HEK293T (cell line): ENCODE measurements at regions of chr20 and their contacts with region 1.

Region 1: DNA sequence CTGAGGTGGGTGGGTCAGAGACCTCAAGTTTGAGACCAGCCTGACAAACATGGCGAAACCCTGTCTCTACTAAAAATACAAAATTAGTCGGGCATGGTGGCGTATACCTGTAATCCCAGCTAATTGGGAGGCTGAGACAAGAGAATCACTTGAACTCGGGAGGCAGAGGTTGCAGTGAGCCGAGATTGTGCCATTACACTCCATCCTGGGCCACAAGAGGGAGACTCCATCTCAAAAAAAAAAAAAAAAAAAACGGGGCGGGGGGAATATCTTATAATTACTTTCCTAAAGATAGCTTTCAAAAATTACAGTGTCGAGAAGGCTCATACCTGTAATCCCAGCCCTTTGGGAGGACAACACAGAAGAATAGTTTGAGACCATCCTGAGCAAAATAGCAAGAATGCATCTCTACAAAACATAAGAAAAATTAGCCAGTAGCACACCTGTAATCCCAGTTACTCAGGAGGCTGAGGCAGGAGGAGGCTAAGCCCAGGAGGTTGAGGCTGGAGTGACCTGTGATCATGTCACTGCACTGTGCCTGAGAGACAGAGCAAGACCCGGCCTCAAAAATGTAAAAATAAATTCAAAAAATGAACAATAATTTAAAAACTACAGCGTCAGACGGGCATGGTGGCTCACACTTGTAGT is 25.8 kb downstream of the CBFA2T2 start:
- DNase-seq: no peak

Region 2: DNA sequence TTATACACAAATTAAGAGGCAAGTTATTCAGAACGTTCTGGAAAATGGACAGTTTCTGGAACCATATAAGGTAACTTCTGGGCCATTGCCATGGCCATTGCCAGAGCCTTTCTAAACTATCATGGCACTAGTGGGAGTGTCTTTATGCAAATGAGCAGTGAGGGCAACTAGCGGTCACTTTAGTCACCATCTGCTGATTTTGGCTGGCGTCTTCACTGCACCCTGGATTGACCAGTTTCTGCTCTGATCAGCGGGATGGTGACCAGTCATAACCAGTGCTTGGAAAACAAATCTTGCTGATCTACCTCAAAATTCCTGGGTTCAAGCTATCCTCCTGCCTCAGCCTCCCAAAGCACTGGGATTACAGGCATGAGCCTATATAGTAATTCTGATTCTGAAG is 64.8 kb before region 1 on chr20:
- CTCF ChIA-PET with region 1: interaction called, 10 read pairs
- POLR2A ChIA-PET with region 1: no interaction called
- DNase-seq: no peak